ENCODE measurements at regions of chr10 and their contacts with region 1.

Region 1: DNA sequence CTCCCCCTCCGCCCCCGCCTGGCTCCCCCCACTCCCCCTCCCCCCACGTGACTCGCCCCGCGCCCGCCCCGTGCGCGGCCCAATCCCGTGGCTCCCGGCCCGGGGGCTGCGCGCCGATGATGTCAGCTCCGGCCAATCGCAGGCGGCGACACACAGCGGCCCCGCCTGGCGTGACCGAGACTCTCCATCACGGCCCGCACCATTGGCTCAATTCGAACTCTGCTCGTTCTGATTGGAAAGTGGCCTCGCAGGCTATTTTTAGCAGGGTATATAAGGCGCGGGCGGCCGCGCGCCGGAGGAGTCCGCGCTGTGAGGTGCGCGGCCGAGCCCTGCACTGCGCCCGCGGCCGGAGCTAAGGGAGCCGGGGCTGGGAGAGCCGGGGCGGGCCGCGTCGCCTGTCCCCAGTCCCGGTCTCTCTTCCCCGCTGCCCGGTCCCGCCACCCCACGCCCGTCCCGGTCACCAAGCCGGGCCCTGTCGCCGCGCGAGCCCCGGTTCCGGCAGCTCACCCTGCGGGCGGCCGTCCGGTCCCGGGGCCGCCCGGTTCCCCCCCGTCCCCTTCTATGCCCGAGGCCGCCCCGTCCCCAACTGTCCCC is 345 bp upstream of the KLF6 start:
- DNase-seq: peak; percentile 97

Region 2: DNA sequence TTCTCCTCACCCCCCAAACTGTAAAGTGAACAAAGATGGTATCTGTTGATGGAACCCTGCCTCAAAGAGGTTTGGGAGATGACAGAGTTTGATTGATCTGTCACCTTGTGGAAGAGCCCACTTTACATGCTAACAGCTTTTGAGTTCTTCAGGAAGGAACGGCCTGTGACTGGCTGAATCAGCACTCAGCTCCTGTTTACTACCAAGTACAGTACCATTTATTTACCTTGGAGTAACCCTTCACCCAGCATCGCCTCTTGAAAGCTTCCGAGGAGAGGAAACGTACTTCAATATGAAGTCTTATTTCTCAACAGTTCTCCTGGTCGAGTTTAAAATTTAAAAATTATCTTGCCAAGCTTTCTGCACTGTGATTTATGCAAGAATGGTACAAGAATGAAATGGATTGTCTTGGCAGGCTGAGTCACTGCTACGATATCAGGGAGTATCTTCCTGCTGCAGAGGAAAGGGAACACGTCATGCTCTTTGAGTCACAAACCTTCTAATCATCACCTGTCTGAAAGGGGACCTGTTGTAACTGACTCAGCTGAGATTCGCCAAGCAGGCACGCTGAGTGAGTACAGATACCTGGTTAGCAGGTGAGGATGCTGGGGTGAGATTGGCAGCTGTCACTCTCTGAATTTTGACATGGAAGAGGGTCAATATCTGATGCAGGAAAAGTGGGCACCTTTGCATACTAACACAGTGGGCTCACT is 30.5 kb before region 1 on chr10:
- CTCF ChIA-PET with region 1: no interaction called
- POLR2A ChIA-PET with region 1: interaction called, 20 read pairs
- DNase-seq: no peak

Region 3: GRCh38 chr10:3811291-3811870 is 26.0 kb after region 1 on chr10:
- CTCF ChIA-PET with region 1: no interaction called
- POLR2A ChIA-PET with region 1: interaction called, 41 read pairs
- DNase-seq: no peak

Region 4: DNA sequence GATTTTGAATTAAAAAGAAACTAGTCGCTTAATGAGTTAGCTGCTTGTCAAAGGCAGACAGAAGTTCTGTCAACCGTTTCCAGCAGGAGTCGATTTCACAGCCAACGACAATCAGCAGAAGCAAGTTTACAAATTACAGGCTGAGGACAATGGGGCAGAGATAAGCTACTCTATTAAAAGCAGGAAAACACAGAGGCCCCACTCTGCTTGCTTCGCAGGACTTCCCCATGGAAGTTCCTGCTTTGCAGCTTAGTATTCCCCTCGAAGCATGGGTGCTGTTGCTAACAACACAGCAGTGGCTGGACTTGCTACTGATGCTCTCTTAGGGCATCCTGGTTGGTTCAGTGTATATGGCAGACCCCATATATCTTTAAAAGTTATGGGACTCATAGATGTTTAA is 50.4 kb after region 1 on chr10:
- CTCF ChIA-PET with region 1: no interaction called
- POLR2A ChIA-PET with region 1: interaction called, 17 read pairs
- DNase-seq: no peak

Region 5: GRCh38 chr10:3867454-3868270 is 82.3 kb after region 1 on chr10:
- CTCF ChIA-PET with region 1: no interaction called
- POLR2A ChIA-PET with region 1: interaction called, 13 read pairs
- DNase-seq: no peak

Measured in HEK293T (cell line).